IMR-90 (cell line): ENCODE measurements at regions of chr11 and their contacts with region 1.

Region 1: DNA sequence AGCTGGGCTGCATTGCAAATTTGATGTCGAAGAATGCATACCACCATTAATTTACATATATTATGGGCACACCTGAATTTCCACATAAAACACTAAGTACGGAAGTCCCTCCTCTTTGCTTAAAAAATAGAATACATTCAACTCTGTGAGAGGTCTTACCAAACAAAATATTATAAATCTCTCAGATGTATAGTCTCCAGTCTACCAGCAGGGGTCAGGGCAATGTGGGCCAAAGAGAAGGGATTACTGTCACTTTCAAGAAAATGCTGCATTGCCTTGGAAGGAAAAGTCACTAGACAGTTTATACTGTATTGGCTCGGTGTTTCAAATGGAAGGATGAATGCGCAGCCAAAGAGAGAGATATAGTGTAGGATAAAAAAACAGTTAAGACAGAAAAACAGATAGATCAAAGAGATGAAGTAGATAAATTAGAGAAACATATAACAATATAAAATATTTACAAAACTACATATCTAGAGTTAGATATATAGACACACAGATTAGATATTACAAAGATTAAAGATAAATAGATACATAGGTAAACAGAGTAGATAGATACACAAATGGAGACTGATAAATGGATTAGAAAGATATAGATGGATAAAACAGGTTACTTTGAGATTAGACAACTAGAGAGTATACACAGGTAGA is 20.9 kb downstream of the SERGEF start:
- DNase-seq: peak; percentile 70
- ATAC-seq: peak; percentile 99
- H3K4me3 ChIP-seq: no peak overlapping the region
- H3K27ac ChIP-seq: no peak overlapping the region
- H3K4me1 ChIP-seq: no peaks in the 10 kb centered on the region
- H3K27me3 ChIP-seq: no peaks in the 10 kb centered on the region
- CTCF ChIP-seq: peak; percentile 77
- POLR2A ChIP-seq: no peak
- RAD21 ChIP-seq: peak; percentile 66

Region 2: DNA sequence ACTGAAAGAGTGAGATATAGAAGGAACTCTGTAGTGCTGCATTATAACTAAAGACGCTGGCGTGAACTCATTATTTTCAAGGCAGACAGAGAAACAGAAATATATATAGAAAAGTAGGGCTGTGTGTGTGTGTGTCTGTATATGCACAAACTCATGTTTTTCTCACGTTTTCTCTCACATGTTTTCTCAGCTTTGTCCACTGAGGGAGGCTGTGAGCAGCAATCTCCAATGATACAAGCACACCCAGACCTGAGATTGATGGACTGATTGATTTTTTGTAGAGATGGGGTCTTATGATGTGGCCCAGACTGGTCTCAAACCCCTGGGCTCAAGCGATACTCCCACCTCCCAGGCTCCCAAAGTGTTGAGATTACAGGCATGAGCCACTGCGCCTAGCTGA is 101.6 kb before region 1 on chr11:
- CTCF ChIA-PET with region 1: no interaction called
- POLR2A ChIA-PET with region 1: no interaction called
- dilution Hi-C with region 1: no loop called
- in situ Hi-C with region 1: no loop called
- intact Hi-C with region 1: no loop called
- DNase-seq: no peak
- ATAC-seq: no peak
- H3K4me3 ChIP-seq: no peak overlapping the region
- H3K27ac ChIP-seq: no peak overlapping the region
- H3K4me1 ChIP-seq: peaks cover 2% of the 10 kb centered on the region; the same call in 1 of the 2 replicates
- H3K27me3 ChIP-seq: no peaks in the 10 kb centered on the region
- CTCF ChIP-seq: no peak
- POLR2A ChIP-seq: no peak
- RAD21 ChIP-seq: no peak

Region 3: DNA sequence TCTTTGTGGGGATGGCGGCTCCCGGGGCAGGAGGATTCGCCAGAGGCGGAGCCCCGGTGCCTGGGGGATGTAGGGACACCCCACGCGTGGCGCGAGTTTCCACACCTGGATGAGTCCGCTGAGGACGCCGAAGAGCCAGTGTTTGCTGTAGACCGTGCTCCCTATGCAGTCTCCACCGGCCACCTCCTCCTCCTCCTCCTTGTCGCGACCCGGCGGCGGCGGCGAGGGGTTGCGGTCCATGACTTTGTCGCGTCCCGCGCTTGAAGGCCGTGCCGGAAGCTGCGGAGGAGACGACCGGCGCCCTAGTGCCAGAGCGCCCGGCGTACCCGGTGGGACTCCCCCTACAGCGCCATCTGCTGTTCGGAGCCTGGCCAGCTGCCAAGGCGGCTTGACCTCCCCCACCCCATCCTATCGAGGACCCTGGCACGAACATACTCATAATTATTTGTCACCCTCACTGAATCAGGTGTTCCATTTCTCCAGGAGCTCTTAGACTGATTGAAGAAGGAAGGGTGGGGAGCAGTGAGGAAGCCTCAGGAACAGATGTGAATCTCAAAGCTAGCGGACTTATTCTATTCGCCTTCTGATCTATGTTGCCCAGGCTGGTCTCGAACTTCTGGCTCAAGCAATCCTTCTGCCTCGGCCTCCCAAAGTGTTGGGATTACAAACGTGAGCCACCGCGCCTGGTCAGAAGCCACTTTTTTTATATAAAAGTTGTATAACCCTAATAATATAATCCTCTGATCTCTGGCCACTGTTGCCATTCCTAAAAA is 114.1 kb after region 1 on chr11 and contains the start of gene SAAL1:
- CTCF ChIA-PET with region 1: interaction called, 5 read pairs
- POLR2A ChIA-PET with region 1: no interaction called
- dilution Hi-C with region 1: no loop called
- in situ Hi-C with region 1: no loop called
- intact Hi-C with region 1: loop called (anchors 1 kb)
- DNase-seq: peak; percentile 67
- ATAC-seq: peak; percentile 99
- H3K4me3 ChIP-seq: peak within 1 kb of the TSS; percentile 88
- H3K27ac ChIP-seq: peak within 1 kb of the TSS; percentile 58; the same call in 1 of the 2 replicates
- H3K4me1 ChIP-seq: peaks cover 4% of the 10 kb centered on the region; the same call in 1 of the 2 replicates
- H3K27me3 ChIP-seq: peaks cover 1% of the 10 kb centered on the region; the same call in 1 of the 2 replicates
- CTCF ChIP-seq: peak; percentile 59
- POLR2A ChIP-seq: 0 out of 2 replicates have a peak, but pooled peaks have one; percentile 18
- RAD21 ChIP-seq: peak; percentile 33
- total RNA-seq, gene SAAL1: 12.5 and 21.1 TPM in 2 replicates

Region 4: GRCh38 chr11:18145025-18145424 is 153.1 kb after region 1 on chr11:
- CTCF ChIA-PET with region 1: no interaction called
- POLR2A ChIA-PET with region 1: no interaction called
- dilution Hi-C with region 1: no loop called
- in situ Hi-C with region 1: no loop called
- intact Hi-C with region 1: loop called (anchors 2 kb)
- DNase-seq: no peak
- ATAC-seq: no peak
- H3K4me3 ChIP-seq: no peak overlapping the region
- H3K27ac ChIP-seq: no peak overlapping the region
- H3K4me1 ChIP-seq: no peaks in the 10 kb centered on the region
- H3K27me3 ChIP-seq: no peaks in the 10 kb centered on the region
- CTCF ChIP-seq: no peak; the same call in 1 of the 2 replicates
- POLR2A ChIP-seq: no peak
- RAD21 ChIP-seq: no peak

Region 5: GRCh38 chr11:18203723-18204122 is 211.8 kb after region 1 on chr11:
- CTCF ChIA-PET with region 1: no interaction called
- POLR2A ChIA-PET with region 1: no interaction called
- dilution Hi-C with region 1: no loop called
- in situ Hi-C with region 1: no loop called
- intact Hi-C with region 1: loop called (anchors 5 kb)
- DNase-seq: peak; percentile 14
- ATAC-seq: peak; percentile 69
- H3K4me3 ChIP-seq: no peak overlapping the region
- H3K27ac ChIP-seq: no peak overlapping the region
- H3K4me1 ChIP-seq: no peaks in the 10 kb centered on the region
- H3K27me3 ChIP-seq: peaks cover 3% of the 10 kb centered on the region
- CTCF ChIP-seq: peak; percentile 45
- POLR2A ChIP-seq: no peak
- RAD21 ChIP-seq: peak; percentile 42; the same call in 1 of the 2 replicates